Left cardiac atrium (tissue), 4 donors: ENCODE measurements at regions of chr6 and their contacts with region 1.

Region 1: GRCh38 chr6:31580807-31581433 is 1.3 kb downstream of the LTB start:
- DNase-seq: peak; percentile 91
- ATAC-seq: peak; percentile 98

Region 2: DNA sequence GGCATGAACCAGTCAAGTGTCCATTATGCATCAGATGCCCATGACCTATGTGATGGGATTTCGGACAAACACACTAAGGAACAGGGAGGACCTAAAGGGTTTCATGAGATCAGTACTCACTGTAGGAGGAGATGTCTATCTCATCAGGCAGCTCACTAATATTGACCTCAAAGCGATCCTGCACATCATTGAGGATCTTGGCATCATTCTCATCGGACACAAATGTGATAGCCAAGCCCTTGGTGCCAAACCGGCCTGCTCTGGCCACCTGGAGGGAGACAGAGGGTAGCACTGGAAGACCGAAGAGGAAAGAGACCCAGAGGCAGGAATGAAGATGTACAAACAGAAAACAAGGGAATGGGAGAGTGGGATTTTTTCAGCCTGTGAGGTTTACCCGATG is 50.3 kb before region 1 on chr6:
- intact Hi-C with region 1: no loop called
- DNase-seq: no peak
- ATAC-seq: no peak

Region 3: GRCh38 chr6:31546962-31547726 is 33.8 kb before region 1 on chr6 and contains the start of gene NFKBIL1:
- intact Hi-C with region 1: loop called in 1 of 2 experiments (anchors 5 kb)
- DNase-seq: peak; percentile 97
- ATAC-seq: peak; percentile 97 to 98
- total RNA-seq, gene NFKBIL1: 12.9 to 14.8 TPM